AG04449 (cell line): ENCODE measurements at regions of chr9 and their contacts with region 1.

Region 1: DNA sequence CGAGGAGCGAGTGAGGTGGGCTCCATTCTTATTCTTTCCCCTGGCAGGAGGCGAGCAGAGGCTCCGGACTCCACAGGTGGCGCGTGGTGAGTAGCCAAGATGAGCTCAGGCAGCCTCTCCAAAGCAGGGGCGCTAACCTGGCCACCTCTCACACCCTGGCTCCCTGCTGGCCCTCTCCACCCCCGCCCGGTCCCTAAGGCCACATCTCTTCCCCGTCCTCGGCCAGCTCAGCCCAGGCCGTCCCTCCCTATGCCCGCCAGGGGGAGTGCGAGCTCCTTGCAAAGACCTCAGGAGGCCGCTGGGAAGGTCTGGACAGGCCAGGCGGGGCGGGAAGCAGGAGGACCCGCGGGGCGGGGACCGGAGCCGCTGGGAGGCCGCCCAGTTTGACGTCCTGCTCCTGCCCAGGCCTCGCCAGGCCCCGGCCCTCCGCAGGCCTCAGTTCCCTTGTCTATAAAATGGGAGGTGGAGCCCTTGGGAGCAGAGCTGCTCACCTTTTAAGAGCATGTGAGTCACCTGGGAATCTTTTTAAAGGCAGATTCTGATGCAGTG is 46.3 kb upstream of the GGTA1 start:
- DNase-seq: peak; percentile 63
- H3K4me3 ChIP-seq: peak overlapping the region; percentile 23; the same call in 1 of the 2 replicates
- CTCF ChIP-seq: peak; percentile 100

Region 2: DNA sequence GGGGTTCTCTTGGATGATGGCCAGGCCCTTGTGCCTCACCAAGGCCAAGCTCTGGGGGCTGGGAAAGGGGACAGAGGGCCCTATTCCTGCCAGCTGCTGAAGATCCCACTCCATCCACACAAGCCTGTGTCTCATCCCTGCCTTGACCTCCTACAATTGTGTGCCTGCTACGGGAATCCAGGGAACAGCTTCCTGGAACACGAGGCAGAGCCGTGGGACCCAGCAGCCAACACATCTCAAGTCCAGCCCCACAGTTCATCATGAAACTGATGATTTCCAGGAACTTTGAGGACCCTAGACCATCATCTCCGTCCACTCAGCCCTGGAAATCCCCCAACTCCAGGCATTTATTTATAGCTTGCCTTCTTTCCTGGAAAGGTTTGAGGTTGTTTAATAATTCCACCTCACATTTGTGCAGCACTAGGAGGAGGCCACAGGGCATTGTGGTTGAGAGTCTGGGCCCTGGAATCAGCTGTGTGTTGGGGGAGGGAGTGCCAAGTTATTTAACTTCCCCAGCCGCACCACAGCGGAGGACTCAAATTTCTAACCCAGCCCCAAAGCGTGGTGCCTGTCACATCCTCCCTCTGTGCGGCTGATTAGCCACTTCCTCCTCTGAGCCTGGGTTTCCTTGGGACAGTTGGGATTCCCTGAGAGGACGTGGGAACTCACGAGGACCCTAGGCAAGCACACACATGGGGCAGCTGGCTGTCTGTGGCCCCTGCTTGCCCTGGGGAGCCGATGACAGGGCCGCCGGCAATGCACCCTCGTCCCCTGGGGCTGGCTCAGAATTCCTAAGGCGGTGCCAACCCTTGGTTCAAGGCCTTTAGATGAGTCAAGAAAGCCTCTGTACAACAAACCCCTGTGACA is 11.9 kb after region 1 on chr9:
- CTCF ChIA-PET with region 1: interaction called, 65 read pairs
- POLR2A ChIA-PET with region 1: no interaction called
- DNase-seq: peak; percentile 76
- H3K4me3 ChIP-seq: peak overlapping the region; percentile 18
- CTCF ChIP-seq: no peak

Region 3: GRCh38 chr9:121598965-121599871 is 53.3 kb after region 1 on chr9:
- CTCF ChIA-PET with region 1: interaction called, 23 read pairs
- POLR2A ChIA-PET with region 1: no interaction called
- DNase-seq: no peak
- H3K4me3 ChIP-seq: peak overlapping the region; percentile 57
- CTCF ChIP-seq: no peak

Region 4: DNA sequence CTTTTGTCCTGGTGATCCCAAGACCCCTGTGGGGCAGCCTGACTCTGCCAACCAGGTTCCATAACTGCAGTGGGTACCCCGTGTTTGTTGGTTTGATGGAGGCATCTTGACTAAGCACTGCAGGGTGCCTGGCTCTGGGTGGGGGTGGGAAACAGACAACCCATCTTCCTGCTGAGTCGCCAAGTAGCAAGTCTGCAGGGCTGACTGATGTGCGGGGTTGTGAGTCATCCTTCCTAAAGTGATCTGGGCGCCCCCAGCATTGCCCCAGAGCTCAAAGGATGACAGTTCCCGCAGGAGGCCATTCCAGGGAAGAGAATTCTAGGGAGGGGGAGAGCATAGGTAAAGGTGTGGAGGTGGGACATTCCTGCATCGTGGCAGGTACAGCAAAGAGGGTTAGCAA is 129.0 kb after region 1 on chr9:
- CTCF ChIA-PET with region 1: interaction called, 97 read pairs
- POLR2A ChIA-PET with region 1: no interaction called
- DNase-seq: no peak
- H3K4me3 ChIP-seq: no peak overlapping the region
- CTCF ChIP-seq: no peak

Region 5: DNA sequence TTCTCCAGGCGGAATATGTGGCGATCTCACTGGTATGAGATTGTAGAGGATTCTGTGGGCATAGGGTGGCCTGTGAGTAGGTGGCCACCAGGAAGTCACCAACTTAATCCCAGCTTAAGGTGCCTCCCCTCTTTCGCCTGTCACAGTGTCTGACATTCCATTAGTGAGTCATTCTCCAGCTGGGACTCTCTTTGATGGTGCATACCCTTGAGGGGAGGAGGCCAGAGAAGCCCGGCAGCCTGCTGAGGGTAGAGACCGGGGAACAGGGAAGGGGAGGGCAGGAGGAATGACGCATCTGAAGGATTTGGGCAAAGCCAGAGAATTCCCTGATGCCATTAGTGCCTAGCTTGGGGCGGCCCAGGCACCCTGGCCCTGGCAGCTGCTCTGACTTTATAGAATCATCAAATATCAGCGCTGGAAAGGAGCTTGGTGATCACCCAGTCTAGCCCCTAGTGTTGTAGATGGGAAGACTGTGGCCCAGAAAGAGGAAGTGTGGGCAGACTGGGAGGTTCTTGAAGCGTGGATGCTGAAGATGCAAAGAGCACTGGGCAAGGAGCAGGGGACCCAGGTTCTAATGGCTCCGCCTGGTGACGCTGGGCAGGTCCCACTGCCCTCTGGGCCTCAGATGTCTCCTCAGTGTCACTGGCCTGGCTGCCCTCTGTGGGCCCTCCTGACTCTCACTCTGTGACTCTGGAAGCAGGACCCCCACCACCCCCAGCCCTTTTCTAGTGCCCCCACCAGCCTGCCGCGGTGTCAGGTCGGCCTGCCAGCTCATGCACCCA is 146.8 kb after region 1 on chr9:
- CTCF ChIA-PET with region 1: interaction called, 87 read pairs
- POLR2A ChIA-PET with region 1: no interaction called
- DNase-seq: no peak
- H3K4me3 ChIP-seq: no peak overlapping the region
- CTCF ChIP-seq: no peak

Region 6: GRCh38 chr9:121992571-121993212 is 446.7 kb after region 1 on chr9:
- CTCF ChIA-PET with region 1: interaction called, 86 read pairs
- POLR2A ChIA-PET with region 1: no interaction called
- DNase-seq: peak; percentile 21
- H3K4me3 ChIP-seq: no peak overlapping the region
- CTCF ChIP-seq: peak; percentile 55